Caco-2 (cell line): ENCODE measurements at regions of chrX and their contacts with region 1.

Region 1: DNA sequence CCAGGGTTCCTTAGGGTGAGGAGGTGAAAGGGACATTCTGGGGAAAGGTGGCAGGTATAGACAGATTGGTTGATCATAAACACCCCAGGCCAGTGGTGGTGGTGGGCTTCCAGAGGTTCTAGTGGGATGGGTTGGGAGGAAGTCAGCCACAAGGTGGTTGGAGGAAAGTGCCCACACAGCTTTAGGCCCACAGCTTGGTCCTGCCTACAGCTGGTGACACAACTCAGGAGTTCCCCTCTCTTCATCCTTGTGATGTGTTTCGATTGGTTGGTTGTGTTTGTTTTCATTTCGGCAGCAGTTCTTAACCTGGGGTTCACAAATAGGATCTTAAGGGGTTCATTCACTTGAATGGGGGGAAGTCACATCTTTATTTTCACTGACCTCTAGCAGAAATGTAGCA is 157.0 kb downstream of the TMEM164 start:
- DNase-seq: no peak
- H3K4me3 ChIP-seq: no peak overlapping the region
- H3K4me3 Mint-ChIP-seq: no peak overlapping the region
- H3K27ac Mint-ChIP-seq: no peak overlapping the region
- H3K4me1 ChIP-seq: no peaks in the 10 kb centered on the region
- H3K4me1 Mint-ChIP-seq: peaks cover 7% of the 10 kb centered on the region
- H3K27me3 ChIP-seq: no peaks in the 10 kb centered on the region
- H3K27me3 Mint-ChIP-seq: no peaks in the 10 kb centered on the region
- CTCF ChIP-seq: no peak

Region 2: DNA sequence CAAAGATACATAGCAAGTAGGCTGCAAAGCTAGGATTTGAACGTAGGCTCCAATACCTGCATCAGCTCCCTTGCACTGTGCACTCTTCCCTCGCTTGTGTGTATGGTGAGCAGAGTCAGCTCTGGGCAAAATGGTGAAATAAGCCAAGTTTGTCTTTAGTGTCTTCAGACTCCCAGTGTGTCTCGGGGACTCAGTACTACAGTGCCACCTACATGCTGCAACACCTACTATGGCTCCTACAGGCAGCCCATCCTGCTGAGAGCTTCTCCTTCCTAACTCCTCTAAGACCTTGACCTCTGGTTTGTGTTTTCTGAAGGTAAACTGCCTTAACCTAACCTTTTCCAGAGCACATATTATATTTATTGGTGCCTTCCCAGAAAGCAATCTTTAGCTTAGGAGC is 241.3 kb after region 1 on chrX:
- CTCF ChIA-PET with region 1: no interaction called
- POLR2A ChIA-PET with region 1: no interaction called
- intact Hi-C with region 1: loop called (anchors 2 kb)
- DNase-seq: no peak
- H3K4me3 ChIP-seq: no peak overlapping the region
- H3K4me3 Mint-ChIP-seq: no peak overlapping the region
- H3K27ac Mint-ChIP-seq: no peak overlapping the region
- H3K4me1 ChIP-seq: peaks cover 12% of the 10 kb centered on the region; the same call in 1 of the 2 replicates
- H3K4me1 Mint-ChIP-seq: peaks cover 22% of the 10 kb centered on the region
- H3K27me3 ChIP-seq: no peaks in the 10 kb centered on the region
- H3K27me3 Mint-ChIP-seq: no peaks in the 10 kb centered on the region
- CTCF ChIP-seq: peak in 1 of 2 experiments; percentile 7

Region 3: DNA sequence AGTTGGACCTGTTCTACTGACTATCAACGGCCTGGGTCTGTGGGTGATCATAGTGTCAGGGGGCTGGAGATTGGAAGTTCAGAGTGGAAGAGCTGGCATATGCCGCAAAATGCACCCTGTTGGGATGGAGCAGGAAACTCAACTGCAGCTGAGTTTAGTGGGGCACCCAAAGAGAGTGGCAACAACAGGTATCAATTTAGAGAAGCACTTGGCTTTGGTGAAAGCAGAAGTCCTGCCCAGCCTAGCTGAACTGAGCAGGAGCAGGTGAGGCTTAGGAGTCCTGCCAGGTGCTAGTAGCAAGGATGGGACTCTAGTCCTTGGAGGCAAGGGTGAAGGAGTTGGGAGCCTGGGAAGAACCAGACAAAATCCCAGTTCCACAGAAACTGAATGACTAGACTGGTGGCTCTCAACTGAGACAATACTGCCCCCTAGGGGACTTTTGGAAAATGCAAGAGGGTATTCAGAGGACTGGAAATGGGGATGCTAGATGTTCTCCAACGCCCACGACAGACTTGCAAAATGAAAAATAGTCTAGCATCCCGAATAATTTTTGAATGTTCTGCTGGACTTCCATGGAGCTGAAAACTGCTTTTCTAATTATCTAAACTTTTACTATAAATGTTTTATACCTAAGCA is 248.2 kb after region 1 on chrX:
- CTCF ChIA-PET with region 1: interaction called, 10 read pairs
- POLR2A ChIA-PET with region 1: no interaction called
- intact Hi-C with region 1: loop called (anchors 1 kb)
- DNase-seq: peak; percentile 46 to 74
- H3K4me3 ChIP-seq: no peak overlapping the region
- H3K4me3 Mint-ChIP-seq: no peak overlapping the region
- H3K27ac Mint-ChIP-seq: no peak overlapping the region
- H3K4me1 ChIP-seq: peaks cover under 1% of the 10 kb centered on the region; the same call in 1 of the 2 replicates
- H3K4me1 Mint-ChIP-seq: no peaks in the 10 kb centered on the region
- H3K27me3 ChIP-seq: no peaks in the 10 kb centered on the region
- H3K27me3 Mint-ChIP-seq: no peaks in the 10 kb centered on the region
- CTCF ChIP-seq: peak; percentile 58 to 62

Region 4: GRCh38 chrX:110412971-110413721 is 253.3 kb after region 1 on chrX:
- CTCF ChIA-PET with region 1: interaction called, 10 read pairs
- POLR2A ChIA-PET with region 1: no interaction called
- intact Hi-C with region 1: loop called (anchors 1 kb)
- DNase-seq: peak; percentile 53 to 66
- H3K4me3 ChIP-seq: no peak overlapping the region
- H3K4me3 Mint-ChIP-seq: no peak overlapping the region
- H3K27ac Mint-ChIP-seq: no peak overlapping the region
- H3K4me1 ChIP-seq: no peaks in the 10 kb centered on the region
- H3K4me1 Mint-ChIP-seq: no peaks in the 10 kb centered on the region
- H3K27me3 ChIP-seq: no peaks in the 10 kb centered on the region
- H3K27me3 Mint-ChIP-seq: no peaks in the 10 kb centered on the region
- CTCF ChIP-seq: peak; percentile 69 to 81